ENCODE measurements at regions of chr3 and their contacts with region 1.

Region 1: DNA sequence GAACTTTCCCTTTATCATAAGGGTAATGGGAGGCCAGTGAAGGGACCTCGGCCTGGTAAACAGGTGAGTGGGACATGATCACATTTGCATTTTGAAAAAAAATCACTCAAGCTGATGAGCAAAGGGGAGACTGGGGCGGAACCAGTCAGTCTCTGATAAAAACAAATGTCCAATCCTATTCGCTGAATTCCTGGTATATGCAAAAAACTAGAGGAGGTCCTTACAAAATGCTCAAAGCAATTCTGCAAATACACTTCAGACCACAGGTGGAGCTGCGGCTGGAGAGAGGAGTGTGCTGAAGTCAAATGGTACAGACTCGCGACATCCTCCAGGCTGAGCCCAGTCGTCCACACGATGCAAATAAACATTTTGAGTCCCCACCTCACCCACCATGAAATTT is 166.7 kb downstream of the FOXP1 start:
- DNase-seq: peak; percentile 61 to 67
- H3K4me3 ChIP-seq: no peak overlapping the region
- H3K4me3 Mint-ChIP-seq: peak overlapping the region; percentile 63
- H3K27ac Mint-ChIP-seq: peak overlapping the region; percentile 96
- H3K4me1 ChIP-seq: peaks cover 38% of the 10 kb centered on the region
- H3K4me1 Mint-ChIP-seq: peaks cover 44% of the 10 kb centered on the region
- H3K27me3 ChIP-seq: no peaks in the 10 kb centered on the region
- H3K27me3 Mint-ChIP-seq: no peaks in the 10 kb centered on the region
- CTCF ChIP-seq: peak; percentile 35 to 39

Region 2: GRCh38 chr3:71548705-71549384 is 132.0 kb after region 1 on chr3:
- CTCF ChIA-PET with region 1: no interaction called
- POLR2A ChIA-PET with region 1: no interaction called
- intact Hi-C with region 1: loop called (anchors 2 kb)
- DNase-seq: no peak
- H3K4me3 ChIP-seq: no peak overlapping the region
- H3K4me3 Mint-ChIP-seq: no peak overlapping the region
- H3K27ac Mint-ChIP-seq: peak overlapping the region; percentile 76
- H3K4me1 ChIP-seq: peaks cover 33% of the 10 kb centered on the region
- H3K4me1 Mint-ChIP-seq: peaks cover 14% of the 10 kb centered on the region
- H3K27me3 ChIP-seq: no peaks in the 10 kb centered on the region
- H3K27me3 Mint-ChIP-seq: no peaks in the 10 kb centered on the region
- CTCF ChIP-seq: no peak

Measured in Caco-2 (cell line).